Right ventricle myocardium inferior (tissue), 1 donor: ENCODE measurements at regions of chr14 and their contacts with region 1.

Region 1: GRCh38 chr14:88492272-88493089 is 62.3 kb downstream of the PTPN21 start:
- DNase-seq: peak; percentile 68
- ATAC-seq: peak; percentile 75

Region 2: GRCh38 chr14:88535149-88535548 is 42.7 kb after region 1 on chr14:
- intact Hi-C with region 1: loop called (anchors 5 kb)
- DNase-seq: no peak
- ATAC-seq: peak; percentile 67

Region 3: DNA sequence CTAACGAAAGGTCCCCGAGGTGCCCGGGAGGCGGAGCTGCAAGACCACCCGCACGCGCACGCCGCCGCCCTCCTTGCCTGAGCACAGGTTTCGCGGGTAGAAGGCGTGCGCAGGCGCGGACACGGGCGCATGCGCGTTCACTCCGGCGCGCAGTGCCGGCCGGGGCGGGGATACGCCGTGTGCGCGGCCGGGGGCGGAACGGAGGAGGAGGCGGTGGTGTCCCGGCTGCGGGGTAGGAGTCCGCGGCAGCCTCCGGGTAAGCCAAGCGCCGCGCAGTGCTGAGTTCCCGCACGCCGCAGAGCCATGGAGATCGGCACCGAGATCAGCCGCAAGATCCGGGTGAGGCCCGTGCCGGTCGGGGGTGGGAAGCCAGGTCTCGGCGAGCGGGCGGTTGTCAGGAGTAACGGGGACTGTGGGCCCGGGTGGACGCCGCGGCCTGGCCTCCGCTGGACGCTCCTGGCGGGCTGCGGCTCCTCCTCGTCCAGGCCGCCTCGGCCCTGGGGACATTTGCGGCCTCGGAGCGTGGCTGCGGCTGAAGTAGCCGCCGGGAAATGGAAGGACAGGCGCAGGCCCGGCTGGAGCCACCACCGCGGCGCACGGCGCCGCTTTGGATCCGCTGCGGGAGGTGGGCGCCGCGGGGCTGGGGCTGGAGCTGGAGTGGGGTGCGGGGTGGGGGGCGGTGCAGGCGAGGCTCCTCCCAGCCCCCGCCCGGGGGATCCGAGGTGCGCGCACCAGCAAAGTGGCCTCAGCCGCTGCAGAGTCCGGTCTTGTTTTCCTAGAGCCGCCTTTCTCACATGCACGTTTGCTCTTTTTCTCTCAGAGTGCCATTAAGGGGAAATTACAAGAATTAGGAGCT is 70.6 kb after region 1 on chr14 and contains the start of gene ZC3H14:
- intact Hi-C with region 1: loop called (anchors 2 kb)
- DNase-seq: peak; percentile 93
- ATAC-seq: peak; percentile 99
- total RNA-seq, gene ZC3H14: 38.3 TPM

Region 4: GRCh38 chr14:89221109-89221810 is 728.8 kb after region 1 on chr14:
- intact Hi-C with region 1: no loop called
- DNase-seq: no peak
- ATAC-seq: peak; percentile 88